ENCODE measurements at regions of chr14 and their contacts with region 1.

Region 1: DNA sequence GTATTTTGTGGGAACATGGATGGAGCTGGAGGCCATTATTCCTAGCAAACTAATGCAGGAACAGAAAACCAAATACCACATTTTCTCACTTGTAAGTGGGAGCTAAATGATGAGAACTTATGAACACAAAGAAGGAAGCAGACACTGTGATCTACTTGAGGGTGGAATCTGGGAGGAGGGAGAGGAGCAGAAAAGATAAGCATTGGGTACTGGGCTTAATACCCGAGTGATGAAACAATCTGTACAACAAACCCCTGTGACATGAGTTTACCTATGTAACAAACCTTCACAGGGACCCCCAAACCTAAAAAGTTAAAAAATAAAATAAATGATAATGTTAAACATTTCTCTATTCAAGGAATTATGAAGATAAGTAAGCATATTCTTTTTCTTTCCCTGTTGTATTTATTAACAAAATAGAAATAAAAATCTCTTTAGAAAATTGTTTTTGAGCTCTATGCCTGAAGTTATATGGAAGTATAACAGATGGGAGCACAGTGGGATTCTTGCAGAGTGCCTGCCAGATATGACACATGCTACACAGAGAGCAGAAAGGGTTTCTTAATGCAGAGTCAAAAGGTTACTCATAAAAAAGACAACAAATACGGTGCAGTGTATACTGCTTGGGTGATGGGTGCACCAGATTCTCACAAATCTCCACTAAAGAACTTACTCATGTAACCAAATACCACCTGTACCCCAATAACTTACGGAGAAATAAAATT is 52.0 kb upstream of the SYNE2 start:
- DNase-seq: no peak
- H3K4me3 ChIP-seq: no peak overlapping the region
- H3K27ac ChIP-seq: no peak overlapping the region
- H3K4me1 ChIP-seq: peaks cover 9% of the 10 kb centered on the region
- CTCF ChIP-seq: no peak

Region 2: DNA sequence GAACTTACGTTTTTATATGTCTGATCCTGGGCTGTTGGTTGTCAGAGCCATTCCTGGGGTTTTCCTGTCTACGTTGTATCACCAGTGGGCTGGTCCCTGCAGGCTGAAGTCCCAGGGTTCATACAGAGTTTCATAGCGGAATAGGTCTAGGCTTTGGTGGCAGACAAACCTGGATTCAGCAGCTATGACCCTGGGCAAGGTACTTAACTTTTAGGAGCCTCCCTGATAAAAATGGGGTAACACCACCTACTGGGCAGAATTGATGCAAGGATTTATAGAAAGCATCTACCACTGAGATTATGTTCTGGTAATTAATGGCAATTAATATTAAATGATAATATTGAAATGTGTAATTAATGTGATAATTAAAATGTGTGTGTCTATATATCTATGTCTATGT is 193.2 kb after region 1 on chr14:
- CTCF ChIA-PET with region 1: no interaction called
- POLR2A ChIA-PET with region 1: no interaction called
- intact Hi-C with region 1: loop called (anchors 1 kb)
- DNase-seq: peak; percentile 25
- H3K4me3 ChIP-seq: no peak overlapping the region
- H3K27ac ChIP-seq: no peak overlapping the region
- H3K4me1 ChIP-seq: no peaks in the 10 kb centered on the region
- CTCF ChIP-seq: peak; percentile 65